ENCODE measurements at regions of chr2 and their contacts with region 1.

Region 1: DNA sequence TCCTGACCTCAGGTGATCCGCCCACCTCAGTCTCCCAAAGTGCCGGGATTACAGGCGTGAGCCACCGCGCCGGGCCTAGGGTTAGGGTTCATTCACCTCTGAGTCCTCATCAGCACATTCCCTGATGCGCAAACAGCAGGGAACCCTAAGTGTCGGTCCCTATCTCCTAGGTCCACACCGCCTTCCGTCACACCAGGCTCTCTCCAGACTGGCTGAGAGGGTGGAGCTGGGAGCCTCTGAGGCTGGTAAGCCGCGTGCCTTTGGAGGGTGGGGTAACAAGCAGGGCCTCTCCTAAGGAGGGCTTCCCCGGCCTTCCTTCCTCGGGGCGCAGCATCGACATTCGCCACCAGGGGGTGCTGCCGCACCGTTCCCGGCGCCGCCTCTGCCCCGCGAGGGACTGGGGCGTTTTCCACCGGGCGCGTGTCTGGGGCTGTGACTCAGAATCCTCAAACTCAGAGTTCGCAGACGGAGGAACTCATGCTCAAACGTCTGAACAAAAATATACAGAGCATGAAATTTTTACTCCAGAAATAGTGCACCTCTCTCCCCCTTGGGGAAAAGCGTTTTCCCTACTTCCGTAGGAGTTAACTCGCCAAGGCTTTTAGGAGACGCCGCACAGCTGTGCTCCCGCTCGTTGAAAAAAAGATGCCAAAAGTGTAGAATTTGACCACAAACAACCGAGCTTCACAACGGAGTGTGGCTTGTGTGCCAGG is 63.9 kb upstream of the ASAP2 start:
- DNase-seq: peak; percentile 68 to 69
- ATAC-seq: peak; percentile 91
- H3K4me3 ChIP-seq: peak overlapping the region; percentile 21 to 43 (median 32)
- H3K27ac ChIP-seq: peak overlapping the region; percentile 27 to 56 (median 38)
- H3K4me1 ChIP-seq: peaks cover 0 to 6% of the 10 kb centered on the region in 2 donors
- H3K27me3 ChIP-seq: no peaks in the 10 kb centered on the region
- CTCF ChIP-seq: peak; percentile 97 to 99 (median 97)
- POLR2A ChIP-seq: no peak

Region 2: DNA sequence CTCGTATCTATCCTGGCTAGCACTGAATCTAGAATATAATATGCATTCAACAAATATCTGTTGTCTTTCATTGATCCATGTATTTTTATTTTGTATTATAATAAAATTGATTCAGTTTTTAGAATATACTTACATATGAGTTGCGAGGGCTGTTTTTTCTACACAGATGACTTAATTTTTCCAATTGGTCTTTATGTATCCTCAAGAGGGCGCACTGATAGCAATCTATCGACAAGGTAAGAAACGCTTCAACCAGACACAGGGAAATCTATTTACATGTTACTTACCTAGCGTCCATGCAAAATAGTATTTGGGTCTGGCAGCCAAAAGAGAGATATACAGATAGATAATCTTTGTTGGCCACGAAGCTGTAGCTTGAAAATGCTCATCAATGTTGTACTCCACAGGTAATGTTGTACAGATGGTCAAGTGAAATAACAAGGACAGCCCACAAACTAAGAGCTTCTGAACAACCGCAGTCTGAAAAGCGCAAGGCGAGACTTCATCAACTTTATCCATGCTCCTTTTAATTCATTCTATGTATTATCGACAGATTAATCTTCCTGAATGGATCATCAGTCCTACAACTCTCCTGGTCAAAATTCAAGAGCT is 269.8 kb before region 1 on chr2:
- in situ Hi-C with region 1: loop called in 2 of 4 experiments (anchors 10 kb)
- intact Hi-C with region 1: loop called (anchors 5 kb)
- DNase-seq: no peak
- ATAC-seq: no peak
- H3K4me3 ChIP-seq: no peak overlapping the region
- H3K27ac ChIP-seq: no peak overlapping the region
- H3K4me1 ChIP-seq: no peaks in the 10 kb centered on the region
- H3K27me3 ChIP-seq: no peaks in the 10 kb centered on the region
- CTCF ChIP-seq: peak in 4 of 5 experiments; percentile 14 to 45 (median 28)
- POLR2A ChIP-seq: no peak

Region 3: GRCh38 chr2:9053534-9053931 is 89.2 kb before region 1 on chr2:
- in situ Hi-C with region 1: no loop called
- intact Hi-C with region 1: no loop called
- DNase-seq: no peak
- ATAC-seq: no peak
- H3K4me3 ChIP-seq: no peak overlapping the region
- H3K27ac ChIP-seq: no peak overlapping the region
- H3K4me1 ChIP-seq: no peaks in the 10 kb centered on the region
- H3K27me3 ChIP-seq: no peaks in the 10 kb centered on the region
- CTCF ChIP-seq: no peak
- POLR2A ChIP-seq: no peak

Region 4: DNA sequence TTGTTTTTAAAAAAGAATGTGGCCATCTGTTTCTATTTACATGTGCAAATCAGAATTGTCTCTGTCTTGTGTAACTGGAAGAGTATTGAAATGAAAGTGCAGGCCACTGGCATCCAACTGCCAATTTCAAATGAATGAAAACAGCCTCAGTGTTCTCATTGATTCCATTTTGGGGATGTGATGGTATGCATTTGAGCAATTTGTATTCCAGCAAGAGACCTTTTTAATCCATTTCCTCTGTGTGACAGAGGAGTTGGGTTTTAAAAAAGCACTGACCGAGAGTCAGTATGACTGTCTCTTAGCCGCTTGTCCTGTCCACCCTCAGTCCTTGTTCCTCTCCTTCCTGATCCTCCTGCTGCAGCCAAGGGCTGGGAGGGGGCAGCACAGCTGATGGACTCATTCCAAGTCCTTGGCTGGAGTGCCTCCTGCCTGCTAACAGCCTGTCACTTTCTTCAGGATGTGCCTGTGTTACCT is 113.9 kb after region 1 on chr2:
- in situ Hi-C with region 1: no loop called
- intact Hi-C with region 1: no loop called
- DNase-seq: no peak
- ATAC-seq: no peak
- H3K4me3 ChIP-seq: no peak overlapping the region
- H3K27ac ChIP-seq: peak overlapping the region in 3 of 4 donors; percentile 27 to 83 (median 31)
- H3K4me1 ChIP-seq: peaks cover 25 to 37% of the 10 kb centered on the region in 2 donors
- H3K27me3 ChIP-seq: no peaks in the 10 kb centered on the region
- CTCF ChIP-seq: no peak
- POLR2A ChIP-seq: no peak

Region 5: GRCh38 chr2:9333591-9334171 is 191.0 kb after region 1 on chr2:
- in situ Hi-C with region 1: loop called (anchors 5 to 10 kb)
- intact Hi-C with region 1: loop called (anchors 1 kb)
- DNase-seq: peak; percentile 24 to 45
- ATAC-seq: peak; percentile 86 to 91
- H3K4me3 ChIP-seq: no peak overlapping the region
- H3K27ac ChIP-seq: peak overlapping the region in 2 of 4 donors; percentile 11 to 24
- H3K4me1 ChIP-seq: peaks cover 7 to 16% of the 10 kb centered on the region in 2 donors
- H3K27me3 ChIP-seq: no peaks in the 10 kb centered on the region
- CTCF ChIP-seq: peak; percentile 36 to 66 (median 45)
- POLR2A ChIP-seq: no peak

Region 6: GRCh38 chr2:9373077-9373875 is 230.6 kb after region 1 on chr2:
- in situ Hi-C with region 1: no loop called
- intact Hi-C with region 1: loop called (anchors 5 kb)
- DNase-seq: no peak
- ATAC-seq: no peak
- H3K4me3 ChIP-seq: no peak overlapping the region
- H3K27ac ChIP-seq: no peak overlapping the region
- H3K4me1 ChIP-seq: peaks cover 3 to 5% of the 10 kb centered on the region in 2 donors
- H3K27me3 ChIP-seq: no peaks in the 10 kb centered on the region
- CTCF ChIP-seq: no peak
- POLR2A ChIP-seq: no peak

Region 7: GRCh38 chr2:9423100-9423921 is 280.6 kb after region 1 on chr2 and contains the starts of genes CPSF3 and ITGB1BP1:
- in situ Hi-C with region 1: loop called in 1 of 4 experiments (anchors 5 kb)
- intact Hi-C with region 1: loop called (anchors 1 kb)
- DNase-seq: peak; percentile 94 to 96
- ATAC-seq: peak; percentile 93 to 96
- H3K4me3 ChIP-seq: peak within 1 kb of the TSS; percentile 84 to 99 (median 98)
- H3K27ac ChIP-seq: peak within 1 kb of the TSS; percentile 82 to 96 (median 91)
- H3K4me1 ChIP-seq: peaks cover 27 to 29% of the 10 kb centered on the region in 2 donors
- H3K27me3 ChIP-seq: no peaks in the 10 kb centered on the region
- CTCF ChIP-seq: peak in 3 of 5 experiments; percentile 11 to 35 (median 27)
- POLR2A ChIP-seq: peak; percentile 55 to 60
- total RNA-seq, gene CPSF3: 20.9 to 51.8 (median 24.1) TPM
- total RNA-seq, gene ITGB1BP1: 21.4 to 28.0 (median 26.4) TPM

Measured in gastrocnemius medialis (tissue), 4 donors.